ENCODE measurements at regions of chr12 and their contacts with region 1.

Region 1: GRCh38 chr12:52582971-52583456 is 9.4 kb upstream of the KRT74 start:
- DNase-seq: peak; percentile 78
- ATAC-seq: peak; percentile 77
- H3K4me3 ChIP-seq: no peak overlapping the region
- H3K27ac ChIP-seq: no peak overlapping the region
- H3K4me1 ChIP-seq: peaks cover 8% of the 10 kb centered on the region; the same call in 1 of the 2 replicates
- H3K27me3 ChIP-seq: no peaks in the 10 kb centered on the region
- CTCF ChIP-seq: peak; percentile 79

Region 2: GRCh38 chr12:52440821-52441319 is 142.1 kb before region 1 on chr12:
- CTCF ChIA-PET with region 1: no interaction called
- POLR2A ChIA-PET with region 1: no interaction called
- intact Hi-C with region 1: no loop called
- DNase-seq: peak; percentile 86
- ATAC-seq: peak; percentile 30
- H3K4me3 ChIP-seq: no peak overlapping the region
- H3K27ac ChIP-seq: peak overlapping the region; percentile 95
- H3K4me1 ChIP-seq: peaks cover 89% of the 10 kb centered on the region
- H3K27me3 ChIP-seq: no peaks in the 10 kb centered on the region
- CTCF ChIP-seq: no peak

Region 3: DNA sequence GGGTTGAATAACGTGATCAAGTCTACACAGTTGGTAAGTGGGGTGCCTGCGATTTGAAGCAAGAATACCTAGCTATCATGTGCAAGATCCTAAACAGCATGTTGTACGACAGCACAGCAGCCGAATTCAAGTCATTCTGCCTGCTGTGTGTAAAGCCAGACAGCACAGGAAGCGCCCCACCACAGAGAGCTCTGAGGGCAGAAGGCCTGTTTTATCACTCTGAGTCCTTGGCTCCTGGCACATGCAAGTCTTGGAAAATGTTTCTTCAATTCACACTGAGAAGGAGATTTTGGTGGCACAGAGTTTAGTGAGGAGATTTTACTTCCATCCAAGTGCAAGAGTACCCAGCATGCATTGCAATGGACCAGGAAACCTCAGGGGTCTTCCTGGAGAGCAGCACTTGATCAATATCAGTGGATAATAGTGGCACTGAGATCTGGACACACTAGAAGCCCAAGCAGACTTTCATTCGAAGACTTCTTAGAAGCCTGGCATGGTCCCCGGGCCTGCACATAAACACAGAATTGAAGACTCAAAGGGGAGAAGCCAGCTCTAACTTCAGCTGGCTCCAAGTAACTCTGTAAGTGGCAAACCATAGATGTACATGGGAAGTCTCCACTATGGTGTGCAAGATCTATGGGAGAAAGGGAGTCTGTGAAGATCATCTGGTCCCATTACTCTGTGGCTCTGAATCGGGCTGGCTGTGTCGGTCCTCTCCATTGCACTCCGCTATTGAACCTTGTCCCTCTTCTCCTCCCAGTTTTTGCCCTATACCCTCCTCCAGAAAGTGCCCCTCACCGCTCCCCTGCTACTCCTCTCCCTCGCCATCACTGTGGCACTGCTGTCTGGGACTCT is 98.7 kb after region 1 on chr12:
- CTCF ChIA-PET with region 1: no interaction called
- POLR2A ChIA-PET with region 1: no interaction called
- intact Hi-C with region 1: no loop called
- DNase-seq: no peak
- ATAC-seq: no peak
- H3K4me3 ChIP-seq: no peak overlapping the region
- H3K27ac ChIP-seq: no peak overlapping the region
- H3K4me1 ChIP-seq: no peaks in the 10 kb centered on the region
- H3K27me3 ChIP-seq: peaks cover 80% of the 10 kb centered on the region
- CTCF ChIP-seq: no peak

Region 4: DNA sequence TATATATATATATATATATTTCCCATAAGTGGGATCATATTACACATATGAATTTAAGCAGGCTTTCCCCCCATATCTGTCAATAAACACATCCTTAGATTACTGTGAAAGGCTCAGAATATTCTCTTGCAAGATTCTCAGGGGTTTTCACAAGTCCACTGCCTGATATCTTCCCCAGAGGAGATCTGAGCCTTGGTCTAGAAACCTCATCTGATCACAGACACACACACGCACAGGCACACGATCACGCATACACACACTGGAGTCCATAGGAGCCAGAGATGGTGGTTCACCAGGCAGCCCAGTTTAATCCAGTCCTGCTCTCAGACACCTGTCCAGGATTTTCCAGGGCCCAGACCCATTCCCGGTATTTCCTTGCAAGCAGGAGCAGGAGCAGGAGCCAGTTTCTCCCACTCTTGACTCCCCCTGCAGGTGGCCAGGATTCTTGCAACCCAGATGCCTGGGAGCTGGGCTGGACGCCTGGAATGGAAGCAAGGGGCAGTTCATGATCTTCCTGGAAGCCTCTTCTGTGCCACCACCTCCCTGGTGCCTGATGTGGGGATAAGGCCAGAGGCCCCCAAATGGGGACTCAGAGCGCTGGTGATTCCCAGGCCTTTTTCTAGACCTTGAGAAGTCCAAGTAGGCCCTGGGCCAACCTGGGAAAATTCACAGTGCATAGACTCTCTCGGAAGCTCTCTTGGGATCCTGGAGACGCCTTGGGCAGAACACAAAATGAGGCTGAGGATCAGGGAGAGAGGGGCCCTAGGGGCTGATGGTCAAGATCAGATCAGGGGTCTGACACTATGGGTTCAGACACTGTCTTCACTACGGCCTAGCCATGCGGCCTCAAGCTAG is 282.3 kb after region 1 on chr12:
- CTCF ChIA-PET with region 1: interaction called, 8 read pairs
- POLR2A ChIA-PET with region 1: no interaction called
- intact Hi-C with region 1: loop called (anchors 1 kb)
- DNase-seq: peak; percentile 87
- ATAC-seq: peak; percentile 91
- H3K4me3 ChIP-seq: no peak overlapping the region
- H3K27ac ChIP-seq: no peak overlapping the region
- H3K4me1 ChIP-seq: peaks cover 6% of the 10 kb centered on the region
- H3K27me3 ChIP-seq: no peaks in the 10 kb centered on the region
- CTCF ChIP-seq: peak; percentile 93